Endothelial cell of umbilical vein (primary cell): ENCODE measurements at regions of chr1 and their contacts with region 1.

Region 1: GRCh38 chr1:92310185-92310597 is 11.3 kb downstream of the RPAP2 start:
- DNase-seq: peak; percentile 33
- H3K4me3 ChIP-seq: no peak overlapping the region
- H3K27ac ChIP-seq: no peak overlapping the region
- H3K4me1 ChIP-seq: no peaks in the 10 kb centered on the region
- H3K27me3 ChIP-seq: no peaks in the 10 kb centered on the region
- CTCF ChIP-seq: peak; percentile 23 to 28
- POLR2A ChIP-seq: no peak

Region 2: DNA sequence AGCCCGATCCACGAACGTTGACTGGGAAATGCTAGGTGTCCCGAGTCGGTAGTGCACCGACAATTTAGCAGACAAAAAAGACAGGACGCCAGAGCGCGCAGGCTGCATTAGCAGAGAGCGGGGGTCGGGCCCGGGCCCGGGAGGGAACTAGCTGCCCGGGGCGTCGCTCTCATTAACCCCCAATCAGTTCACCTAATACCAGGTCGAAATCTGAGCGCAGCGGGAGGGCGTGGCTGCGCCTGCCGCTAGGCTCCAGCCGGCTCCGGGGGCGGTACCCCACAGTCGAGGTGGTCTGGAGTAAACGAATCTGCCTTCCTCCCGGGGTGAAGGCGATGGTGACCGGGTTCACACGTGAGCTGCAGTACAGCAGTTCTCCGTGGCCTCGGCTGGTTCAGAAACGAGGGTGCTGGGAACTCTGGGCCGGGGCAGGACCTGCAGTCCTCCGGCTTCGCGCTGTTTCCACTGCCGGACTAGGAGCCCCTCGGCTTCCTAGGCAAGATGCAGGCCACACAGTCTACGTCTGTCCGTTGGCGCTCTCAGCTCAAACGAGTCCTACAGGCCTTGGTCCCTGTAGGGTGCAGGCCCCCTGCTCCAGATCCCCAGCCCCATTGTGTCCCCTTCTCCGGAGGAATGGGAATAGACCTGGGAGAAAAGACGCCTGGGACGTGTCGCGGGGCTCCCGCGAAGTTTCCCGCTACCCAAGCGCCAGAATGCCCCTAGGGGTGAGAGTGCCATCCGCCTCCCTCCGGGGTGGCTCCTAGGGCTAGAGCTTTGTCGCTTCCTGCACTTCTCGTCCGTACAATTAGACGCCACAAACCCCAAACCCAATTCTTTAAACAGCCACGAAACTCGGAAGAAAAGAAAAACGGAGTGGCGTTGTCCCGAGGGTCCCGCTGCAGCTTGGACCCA is 174.5 kb after region 1 on chr1:
- CTCF ChIA-PET with region 1: interaction called, 11 read pairs
- POLR2A ChIA-PET with region 1: no interaction called
- dilution Hi-C with region 1: no loop called
- intact Hi-C with region 1: loop called (anchors 5 kb)
- DNase-seq: peak; percentile 23
- H3K4me3 ChIP-seq: peak overlapping the region in 1 of 3 experiments; percentile 26
- H3K27ac ChIP-seq: no peak overlapping the region
- H3K4me1 ChIP-seq: peaks cover 55% of the 10 kb centered on the region
- H3K27me3 ChIP-seq: peaks cover 66 to 94% of the 10 kb centered on the region in 2 experiments
- CTCF ChIP-seq: no peak
- POLR2A ChIP-seq: no peak

Region 3: DNA sequence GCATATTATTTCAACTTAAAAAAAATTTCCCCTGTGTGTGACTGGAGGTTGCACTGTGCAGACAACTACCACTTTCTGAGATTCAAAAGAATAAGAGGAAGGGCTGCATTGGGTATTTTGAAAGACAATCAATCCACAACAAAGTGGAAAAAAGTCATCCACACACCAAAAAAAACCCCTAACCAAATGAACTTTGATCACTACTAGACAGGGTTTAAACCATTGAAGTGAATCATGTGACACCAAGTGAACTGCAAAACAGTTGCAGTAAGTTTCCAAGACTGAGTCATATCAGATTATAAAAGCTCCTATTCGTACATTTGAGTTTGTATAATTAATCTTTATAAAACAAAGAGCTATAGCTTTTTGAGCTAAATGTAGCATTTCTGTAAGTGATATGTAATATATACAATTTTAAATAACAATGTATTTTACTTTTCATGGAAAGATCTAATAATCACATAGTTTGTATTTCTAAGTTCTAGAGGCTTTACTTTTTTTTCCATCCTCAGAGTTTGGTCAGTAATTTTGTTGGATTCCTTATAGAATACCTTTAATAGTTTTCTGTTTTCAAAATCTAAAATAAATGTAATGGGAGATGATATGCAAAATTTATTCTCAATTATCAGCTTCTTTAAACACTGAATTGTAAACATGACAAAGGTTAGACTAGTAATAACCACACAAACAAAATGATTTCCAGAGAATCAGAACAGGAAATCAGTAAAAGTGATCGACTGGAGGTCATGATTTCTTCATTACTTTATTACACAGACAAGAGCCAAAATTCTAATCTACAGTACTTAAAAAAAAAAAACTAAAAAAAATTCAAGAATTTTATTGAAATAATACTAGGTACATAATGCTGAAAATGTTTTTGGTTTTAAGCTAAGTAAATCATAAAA is 227.0 kb after region 1 on chr1:
- CTCF ChIA-PET with region 1: interaction called, 11 read pairs
- POLR2A ChIA-PET with region 1: no interaction called
- dilution Hi-C with region 1: no loop called
- intact Hi-C with region 1: no loop called
- DNase-seq: peak; percentile 64
- H3K4me3 ChIP-seq: no peak overlapping the region
- H3K27ac ChIP-seq: no peak overlapping the region
- H3K4me1 ChIP-seq: peaks cover 31% of the 10 kb centered on the region
- H3K27me3 ChIP-seq: no peaks in the 10 kb centered on the region
- CTCF ChIP-seq: no peak
- POLR2A ChIP-seq: no peak

Region 4: GRCh38 chr1:92587445-92587844 is 277.3 kb after region 1 on chr1:
- CTCF ChIA-PET with region 1: interaction called, 10 read pairs
- POLR2A ChIA-PET with region 1: no interaction called
- dilution Hi-C with region 1: no loop called
- intact Hi-C with region 1: no loop called
- DNase-seq: no peak
- H3K4me3 ChIP-seq: no peak overlapping the region
- H3K27ac ChIP-seq: no peak overlapping the region
- H3K4me1 ChIP-seq: peaks cover 17% of the 10 kb centered on the region
- H3K27me3 ChIP-seq: no peaks in the 10 kb centered on the region
- CTCF ChIP-seq: no peak
- POLR2A ChIP-seq: no peak

Region 5: GRCh38 chr1:92599184-92599583 is 289.0 kb after region 1 on chr1:
- CTCF ChIA-PET with region 1: interaction called, 62 read pairs
- POLR2A ChIA-PET with region 1: no interaction called
- dilution Hi-C with region 1: no loop called
- intact Hi-C with region 1: loop called (anchors 1 kb)
- DNase-seq: peak; percentile 24
- H3K4me3 ChIP-seq: no peak overlapping the region
- H3K27ac ChIP-seq: no peak overlapping the region
- H3K4me1 ChIP-seq: no peaks in the 10 kb centered on the region
- H3K27me3 ChIP-seq: no peaks in the 10 kb centered on the region
- CTCF ChIP-seq: peak; percentile 9 to 24
- POLR2A ChIP-seq: no peak

Region 6: GRCh38 chr1:92623187-92623778 is 313.1 kb after region 1 on chr1:
- CTCF ChIA-PET with region 1: interaction called, 40 read pairs
- POLR2A ChIA-PET with region 1: no interaction called
- dilution Hi-C with region 1: no loop called
- intact Hi-C with region 1: loop called (anchors 1 kb)
- DNase-seq: peak; percentile 28
- H3K4me3 ChIP-seq: no peak overlapping the region
- H3K27ac ChIP-seq: no peak overlapping the region
- H3K4me1 ChIP-seq: no peaks in the 10 kb centered on the region
- H3K27me3 ChIP-seq: no peaks in the 10 kb centered on the region
- CTCF ChIP-seq: peak in 1 of 2 donors; percentile 6
- POLR2A ChIP-seq: no peak